Activated T-helper 1 cell treated with anti-CD3 and anti-CD28 coated beads, Interleukin-12 subunit alpha, Interleukin-12 subunit beta, Interleukin-2, Interleukin-4 antibody, amounts not matched to agents 30 ng/mL and 10 ng/mL and 1 ng/mL, durations not matched to agents 14 hours and 24 hours and 36 hours (primary cell): ENCODE measurements at regions of chr9 and their contacts with region 1.

Region 1: DNA sequence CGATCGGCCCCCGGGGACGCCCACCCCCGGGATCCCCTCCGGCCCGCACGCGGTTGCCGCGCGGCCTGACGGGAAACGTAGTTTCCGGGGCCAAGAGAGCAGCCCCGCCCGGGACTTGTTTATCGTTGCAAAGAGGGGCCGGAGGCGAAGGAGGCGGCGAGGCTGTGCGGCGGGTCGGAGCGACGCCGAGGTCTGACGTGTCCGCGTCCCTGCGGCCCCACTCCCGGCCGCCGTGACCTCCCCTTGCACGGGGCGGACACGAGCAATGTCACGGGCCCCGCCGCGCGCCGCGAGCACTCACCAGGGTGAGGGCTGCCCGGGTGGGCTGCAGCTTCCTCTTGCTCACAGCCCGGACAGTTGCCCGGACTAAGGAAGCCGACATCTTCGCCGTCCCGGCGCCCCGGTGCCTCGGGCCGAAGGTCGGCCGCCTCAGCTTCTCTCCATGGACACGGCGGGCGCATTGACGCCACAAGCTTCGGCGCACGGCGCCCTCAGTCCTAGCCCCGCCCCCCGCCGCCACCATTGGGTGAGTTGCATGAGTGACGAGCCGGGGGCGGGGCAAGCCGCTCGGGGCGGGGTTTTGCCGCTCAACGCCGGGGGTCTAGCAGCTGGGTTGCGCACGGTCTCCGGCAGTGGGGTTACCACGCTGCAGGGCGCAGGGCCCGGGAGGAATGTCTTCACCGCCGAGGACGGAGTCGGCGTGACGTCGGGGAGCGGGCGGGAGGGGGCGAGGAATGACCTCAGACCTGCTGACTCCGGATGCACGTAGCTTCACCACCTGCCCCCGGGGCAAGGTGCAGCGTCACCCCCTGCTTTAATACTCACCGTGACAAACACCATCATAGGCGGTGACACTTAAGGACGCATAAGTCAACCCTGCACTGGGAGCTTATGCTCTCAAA is at the start of gene ISCA1:
- DNase-seq: peak; percentile 91
- H3K4me3 Mint-ChIP-seq: peak within 1 kb of the TSS; percentile 89
- H3K27ac Mint-ChIP-seq: peak within 1 kb of the TSS; percentile 96
- H3K4me1 Mint-ChIP-seq: peaks cover 42% of the 10 kb centered on the region
- H3K27me3 Mint-ChIP-seq: no peaks in the 10 kb centered on the region
- total RNA-seq, gene ISCA1: 27.4 and 30.3 TPM in 2 replicates

Region 2: GRCh38 chr9:86112057-86112456 is 170.3 kb before region 1 on chr9:
- intact Hi-C with region 1: loop called (anchors 2 kb)
- DNase-seq: no peak
- H3K4me3 Mint-ChIP-seq: no peak overlapping the region
- H3K27ac Mint-ChIP-seq: no peak overlapping the region
- H3K4me1 Mint-ChIP-seq: peaks cover 2% of the 10 kb centered on the region
- H3K27me3 Mint-ChIP-seq: peaks cover 8% of the 10 kb centered on the region

Region 3: GRCh38 chr9:86202338-86202882 is 79.9 kb before region 1 on chr9:
- intact Hi-C with region 1: loop called (anchors 5 kb)
- DNase-seq: peak; percentile 1
- H3K4me3 Mint-ChIP-seq: no peak overlapping the region
- H3K27ac Mint-ChIP-seq: no peak overlapping the region
- H3K4me1 Mint-ChIP-seq: no peaks in the 10 kb centered on the region
- H3K27me3 Mint-ChIP-seq: peaks cover 13% of the 10 kb centered on the region

Region 4: GRCh38 chr9:86337469-86338108 is 55.3 kb after region 1 on chr9:
- intact Hi-C with region 1: loop called (anchors 2 kb)
- DNase-seq: no peak
- H3K4me3 Mint-ChIP-seq: peak overlapping the region; percentile 83
- H3K27ac Mint-ChIP-seq: peak overlapping the region; percentile 63
- H3K4me1 Mint-ChIP-seq: peaks cover 46% of the 10 kb centered on the region
- H3K27me3 Mint-ChIP-seq: no peaks in the 10 kb centered on the region